Motor neuron (in vitro differentiated cells): ENCODE measurements at regions of chr7 and their contacts with region 1.

Region 1: DNA sequence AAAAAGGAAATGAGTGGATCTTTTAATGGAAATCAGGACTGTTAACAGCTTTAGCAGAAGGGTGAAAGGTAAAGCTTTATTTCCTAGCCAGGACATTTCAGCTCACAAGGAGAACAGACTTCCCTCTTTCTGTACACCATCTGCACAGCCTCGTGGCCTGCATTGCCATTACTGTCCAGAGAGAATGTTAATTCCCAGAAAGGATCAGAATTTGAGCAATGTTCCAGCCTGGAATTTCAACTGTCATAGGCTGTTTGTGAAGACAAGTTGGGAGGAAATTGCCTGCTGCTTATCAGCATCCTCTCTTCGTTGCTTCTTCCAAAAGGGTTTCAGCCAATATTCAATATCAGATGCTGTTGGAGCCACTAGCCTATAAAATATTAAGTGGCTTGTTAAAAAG is 22.0 kb downstream of the NXPH1 start:
- ATAC-seq: peak in 1 of 8 experiments; percentile 24
- H3K4me3 ChIP-seq: no peak overlapping the region
- H3K27ac ChIP-seq: no peak overlapping the region
- H3K4me1 ChIP-seq: peaks cover 0 to 14% of the 10 kb centered on the region in 2 donors

Region 2: GRCh38 chr7:8232999-8233847 is 222.2 kb before region 1 on chr7:
- in situ Hi-C with region 1: no loop called
- ATAC-seq: peak in 2 of 8 experiments; percentile 47 to 53
- H3K4me3 ChIP-seq: no peak overlapping the region
- H3K27ac ChIP-seq: no peak overlapping the region
- H3K4me1 ChIP-seq: no peaks in the 10 kb centered on the region

Region 3: GRCh38 chr7:8699875-8700624 is 244.6 kb after region 1 on chr7:
- in situ Hi-C with region 1: loop called in 2 of 9 experiments (anchors 25 kb)
- ATAC-seq: peak in 5 of 8 experiments; percentile 40 to 89 (median 76)
- H3K4me3 ChIP-seq: no peak overlapping the region
- H3K27ac ChIP-seq: no peak overlapping the region
- H3K4me1 ChIP-seq: peaks cover 2 to 11% of the 10 kb centered on the region in 2 donors

Region 4: GRCh38 chr7:8724080-8724718 is 268.8 kb after region 1 on chr7:
- in situ Hi-C with region 1: loop called in 1 of 9 experiments (anchors 25 kb)
- ATAC-seq: peak; percentile 30 to 86 (median 55)
- H3K4me3 ChIP-seq: no peak overlapping the region
- H3K27ac ChIP-seq: no peak overlapping the region
- H3K4me1 ChIP-seq: no peaks in the 10 kb centered on the region